CD4-positive, alpha-beta T cell (primary cell): ENCODE measurements at regions of chr3 and their contacts with region 1.

Region 1: GRCh38 chr3:11719406-11720230 is 75.9 kb upstream of the VGLL4 start:
- DNase-seq: peak; percentile 49 to 91 (median 77)
- ATAC-seq: peak; percentile 75
- H3K4me3 ChIP-seq: peak overlapping the region; percentile 75
- H3K4me3 Mint-ChIP-seq: peak overlapping the region; percentile 84
- H3K27ac ChIP-seq: no peak overlapping the region
- H3K27ac Mint-ChIP-seq: peak overlapping the region; percentile 62
- H3K4me1 ChIP-seq: peaks cover 19% of the 10 kb centered on the region
- H3K4me1 Mint-ChIP-seq: peaks cover 31% of the 10 kb centered on the region
- H3K27me3 ChIP-seq: no peaks in the 10 kb centered on the region
- H3K27me3 Mint-ChIP-seq: peaks cover 6% of the 10 kb centered on the region
- CTCF ChIP-seq: no peak

Region 2: DNA sequence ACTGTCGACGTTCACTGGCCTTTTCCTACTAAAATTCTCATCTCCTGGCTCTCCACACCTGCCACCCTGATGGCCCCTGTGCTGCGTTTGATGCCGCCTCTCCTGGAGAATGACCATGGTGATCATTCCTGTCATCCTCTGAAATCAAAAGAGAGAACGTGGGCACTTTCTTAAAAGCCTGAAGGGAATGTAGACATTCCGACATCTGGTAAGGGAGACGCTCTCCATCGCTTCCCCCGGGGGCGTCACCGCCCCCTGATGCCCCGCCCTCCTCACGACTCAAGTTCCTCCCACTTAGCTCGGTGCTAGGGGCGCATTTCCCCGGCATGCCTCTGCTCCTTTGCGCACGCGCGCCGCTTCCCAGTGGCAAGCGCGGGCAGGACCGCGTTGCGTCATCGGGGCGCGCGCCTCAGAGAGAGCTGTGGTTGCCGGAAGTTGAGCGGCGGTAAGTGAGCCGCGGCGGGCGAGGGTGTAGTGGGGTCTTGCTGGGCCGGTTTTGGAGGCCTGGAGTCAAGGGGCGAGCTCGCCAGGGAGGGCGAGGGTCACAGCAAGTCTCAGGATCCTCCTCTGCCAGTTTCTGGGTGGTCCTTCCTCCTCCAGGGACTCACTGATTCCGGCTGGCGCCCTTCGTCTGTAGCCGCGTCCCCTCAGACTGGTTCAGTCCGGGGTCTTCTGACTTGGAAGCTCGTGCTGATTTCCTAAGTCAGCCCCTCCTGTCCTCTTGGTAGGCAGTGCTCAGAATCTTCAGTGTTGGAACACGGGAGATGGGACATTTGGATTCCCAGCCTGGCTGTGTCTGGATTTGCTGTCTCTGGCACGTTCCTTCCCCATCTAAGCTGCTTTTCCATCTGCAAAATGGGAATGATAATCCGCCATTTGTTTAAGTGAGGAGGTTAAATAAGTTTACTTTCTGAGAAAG is 447.4 kb before region 1 on chr3 and contains the start of gene ATG7:
- CTCF ChIA-PET with region 1: no interaction called
- POLR2A ChIA-PET with region 1: interaction called, 3 read pairs
- intact Hi-C with region 1: loop called in 1 of 2 experiments (anchors 5 kb)
- DNase-seq: peak; percentile 92 to 99 (median 96)
- ATAC-seq: peak; percentile 96
- H3K4me3 ChIP-seq: peak within 1 kb of the TSS; percentile 90
- H3K4me3 Mint-ChIP-seq: peak within 1 kb of the TSS; percentile 98
- H3K27ac ChIP-seq: peak within 1 kb of the TSS; percentile 78 to 90
- H3K27ac Mint-ChIP-seq: peak within 1 kb of the TSS; percentile 98
- H3K4me1 ChIP-seq: peaks cover 24% of the 10 kb centered on the region
- H3K4me1 Mint-ChIP-seq: peaks cover 54% of the 10 kb centered on the region
- H3K27me3 ChIP-seq: no peaks in the 10 kb centered on the region
- H3K27me3 Mint-ChIP-seq: no peaks in the 10 kb centered on the region
- CTCF ChIP-seq: no peak
- total RNA-seq, gene ATG7: 21.4 to 25.7 TPM

Region 3: DNA sequence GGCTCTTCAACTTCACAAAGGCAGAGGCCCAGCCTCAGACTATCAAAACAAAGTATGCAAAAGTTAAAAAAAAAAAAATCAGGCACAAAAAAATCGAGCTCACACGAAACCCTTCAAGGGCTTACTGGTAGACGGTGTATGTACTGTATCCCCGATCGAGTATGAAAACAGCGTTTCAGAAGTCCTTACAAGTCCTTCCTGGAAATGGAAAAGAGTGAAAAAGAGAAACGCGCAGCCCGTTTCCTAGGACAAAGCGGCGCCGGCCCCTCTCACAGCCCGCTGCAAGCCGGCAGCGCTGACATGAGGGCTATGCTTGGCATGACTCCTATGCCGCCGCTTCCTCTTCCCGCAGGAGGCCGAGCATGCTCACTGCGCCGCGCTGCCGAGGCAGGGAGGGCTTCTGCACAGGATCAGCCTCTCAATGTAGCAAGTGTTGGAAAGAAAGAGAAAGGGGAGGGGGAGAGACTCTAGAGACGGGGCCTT is 76.0 kb before region 1 on chr3 and contains the start of gene VGLL4:
- CTCF ChIA-PET with region 1: no interaction called
- POLR2A ChIA-PET with region 1: no interaction called
- intact Hi-C with region 1: loop called in 1 of 2 experiments (anchors 5 kb)
- DNase-seq: peak; percentile 27 to 79 (median 57)
- ATAC-seq: peak; percentile 54
- H3K4me3 ChIP-seq: peak within 1 kb of the TSS; percentile 89
- H3K4me3 Mint-ChIP-seq: peak within 1 kb of the TSS; percentile 98
- H3K27ac ChIP-seq: peak within 1 kb of the TSS; percentile 80 to 89
- H3K27ac Mint-ChIP-seq: peak within 1 kb of the TSS; percentile 98
- H3K4me1 ChIP-seq: peaks cover 22% of the 10 kb centered on the region
- H3K4me1 Mint-ChIP-seq: peaks cover 43% of the 10 kb centered on the region
- H3K27me3 ChIP-seq: no peaks in the 10 kb centered on the region
- H3K27me3 Mint-ChIP-seq: no peaks in the 10 kb centered on the region
- CTCF ChIP-seq: no peak
- total RNA-seq, gene VGLL4: 10.5 to 11.3 TPM

Region 4: GRCh38 chr3:11770477-11771391 is 51.1 kb after region 1 on chr3:
- CTCF ChIA-PET with region 1: no interaction called
- POLR2A ChIA-PET with region 1: no interaction called
- intact Hi-C with region 1: loop called (anchors 2 to 5 kb)
- DNase-seq: peak; percentile 67 to 95 (median 72)
- ATAC-seq: peak; percentile 99
- H3K4me3 ChIP-seq: peak overlapping the region; percentile 24
- H3K4me3 Mint-ChIP-seq: peak overlapping the region; percentile 2
- H3K27ac ChIP-seq: peak overlapping the region; percentile 52 to 53
- H3K27ac Mint-ChIP-seq: peak overlapping the region; percentile 60
- H3K4me1 ChIP-seq: peaks cover 18% of the 10 kb centered on the region
- H3K4me1 Mint-ChIP-seq: peaks cover 19% of the 10 kb centered on the region
- H3K27me3 ChIP-seq: no peaks in the 10 kb centered on the region
- H3K27me3 Mint-ChIP-seq: no peaks in the 10 kb centered on the region
- CTCF ChIP-seq: no peak

Region 5: DNA sequence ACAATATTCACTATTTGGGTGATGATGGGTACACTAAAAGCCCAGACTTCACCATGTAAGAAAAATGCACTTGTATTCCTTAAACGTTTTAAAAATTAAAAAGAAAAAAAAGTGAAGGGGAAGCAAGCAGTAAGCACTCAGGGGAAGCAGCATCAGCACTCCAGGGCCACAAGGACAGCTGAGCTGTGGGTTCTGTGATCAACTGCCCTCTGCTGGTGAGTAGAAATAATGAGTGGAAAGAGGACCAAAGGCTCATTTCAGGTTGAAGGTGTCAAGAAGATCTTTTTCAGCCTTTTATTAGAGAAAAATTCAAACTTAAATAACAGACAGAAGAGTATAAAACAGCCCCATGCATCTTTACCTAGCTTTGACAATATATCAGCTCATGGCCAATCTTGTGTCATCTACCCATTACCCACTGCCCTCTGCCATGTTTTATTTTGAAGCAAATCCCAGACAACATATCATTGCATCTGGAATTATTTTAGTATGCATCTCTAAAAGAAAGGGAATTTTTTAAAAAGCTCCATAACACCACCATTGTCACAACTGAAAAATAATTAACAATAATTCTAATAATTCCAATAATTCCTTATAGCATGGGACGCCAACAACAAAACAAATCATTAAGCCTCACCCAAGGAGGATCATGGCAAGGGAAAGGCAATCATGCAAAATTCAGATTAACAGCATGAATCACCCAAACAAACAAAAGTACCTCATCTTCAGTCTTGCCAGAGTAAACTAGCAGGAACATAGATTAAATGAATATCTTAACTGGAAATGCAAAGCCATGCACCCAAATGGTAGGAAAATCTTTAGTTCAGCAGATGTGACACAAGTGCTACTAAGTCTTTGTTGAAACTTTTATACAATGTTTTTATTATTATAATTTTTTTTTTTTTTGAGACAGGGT is 84.6 kb after region 1 on chr3:
- CTCF ChIA-PET with region 1: no interaction called
- POLR2A ChIA-PET with region 1: no interaction called
- intact Hi-C with region 1: loop called (anchors 5 to 10 kb)
- DNase-seq: peak in 11 of 14 experiments; percentile 4 to 75 (median 17)
- ATAC-seq: peak; percentile 91
- H3K4me3 ChIP-seq: no peak overlapping the region
- H3K4me3 Mint-ChIP-seq: no peak overlapping the region
- H3K27ac ChIP-seq: no peak overlapping the region
- H3K27ac Mint-ChIP-seq: no peak overlapping the region
- H3K4me1 ChIP-seq: no peaks in the 10 kb centered on the region
- H3K4me1 Mint-ChIP-seq: peaks cover 10% of the 10 kb centered on the region
- H3K27me3 ChIP-seq: no peaks in the 10 kb centered on the region
- H3K27me3 Mint-ChIP-seq: no peaks in the 10 kb centered on the region
- CTCF ChIP-seq: peak; percentile 74

Region 6: GRCh38 chr3:11846281-11847034 is 126.8 kb after region 1 on chr3 and contains the start of gene TAMM41:
- CTCF ChIA-PET with region 1: no interaction called
- POLR2A ChIA-PET with region 1: interaction called, 7 read pairs
- intact Hi-C with region 1: loop called in 1 of 2 experiments (anchors 5 kb)
- DNase-seq: peak; percentile 78 to 94 (median 87)
- ATAC-seq: peak; percentile 99
- H3K4me3 ChIP-seq: peak within 1 kb of the TSS; percentile 95
- H3K4me3 Mint-ChIP-seq: peak within 1 kb of the TSS; percentile 95
- H3K27ac ChIP-seq: peak within 1 kb of the TSS; percentile 59 to 69
- H3K27ac Mint-ChIP-seq: peak within 1 kb of the TSS; percentile 93
- H3K4me1 ChIP-seq: peaks cover 34% of the 10 kb centered on the region
- H3K4me1 Mint-ChIP-seq: peaks cover 44% of the 10 kb centered on the region
- H3K27me3 ChIP-seq: no peaks in the 10 kb centered on the region
- H3K27me3 Mint-ChIP-seq: no peaks in the 10 kb centered on the region
- CTCF ChIP-seq: peak; percentile 76
- total RNA-seq, gene TAMM41: 19.7 to 22.0 TPM